CD8-positive, alpha-beta T cell (primary cell): ENCODE measurements at regions of chr10 and their contacts with region 1.

Region 1: DNA sequence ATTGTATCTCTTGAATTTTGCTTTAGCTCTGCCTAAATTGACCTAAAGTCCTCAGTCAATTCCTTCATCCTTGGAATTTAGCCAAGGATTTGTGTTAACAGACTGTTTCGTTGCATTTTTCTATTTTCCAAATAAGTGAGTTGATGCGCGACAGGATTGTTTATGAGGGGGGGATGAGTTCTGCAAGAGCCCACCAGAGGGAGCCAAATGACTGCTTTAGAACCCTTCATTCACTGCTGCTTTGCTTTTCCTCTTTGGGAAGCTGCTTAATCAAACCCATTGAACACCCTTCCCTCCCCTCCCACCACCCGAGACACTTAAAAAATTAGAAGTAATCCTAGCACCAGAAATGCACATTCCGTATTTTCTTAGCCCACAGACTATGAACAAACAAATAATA is 33.7 kb upstream of the PTF1A start:
- DNase-seq: peak in 7 of 9 experiments; percentile 1 to 56 (median 27)
- ATAC-seq: no peak
- H3K4me3 ChIP-seq: no peak overlapping the region
- H3K4me3 Mint-ChIP-seq: no peak overlapping the region
- H3K27ac ChIP-seq: no peak overlapping the region
- H3K27ac Mint-ChIP-seq: no peak overlapping the region
- H3K4me1 ChIP-seq: peaks cover 4% of the 10 kb centered on the region
- H3K4me1 Mint-ChIP-seq: peaks cover 6% of the 10 kb centered on the region
- H3K27me3 ChIP-seq: peaks cover 4 to 6% of the 10 kb centered on the region in 2 experiments
- H3K27me3 Mint-ChIP-seq: peaks cover 47% of the 10 kb centered on the region
- CTCF ChIP-seq: peak; percentile 83

Region 2: GRCh38 chr10:23047201-23048050 is 110.9 kb before region 1 on chr10:
- CTCF ChIA-PET with region 1: no interaction called
- POLR2A ChIA-PET with region 1: no interaction called
- intact Hi-C with region 1: no loop called
- DNase-seq: no peak
- ATAC-seq: no peak
- H3K4me3 ChIP-seq: no peak overlapping the region
- H3K4me3 Mint-ChIP-seq: no peak overlapping the region
- H3K27ac ChIP-seq: no peak overlapping the region
- H3K27ac Mint-ChIP-seq: no peak overlapping the region
- H3K4me1 ChIP-seq: no peaks in the 10 kb centered on the region
- H3K4me1 Mint-ChIP-seq: no peaks in the 10 kb centered on the region
- H3K27me3 ChIP-seq: no peaks in the 10 kb centered on the region
- H3K27me3 Mint-ChIP-seq: peaks cover 17% of the 10 kb centered on the region
- CTCF ChIP-seq: no peak

Region 3: DNA sequence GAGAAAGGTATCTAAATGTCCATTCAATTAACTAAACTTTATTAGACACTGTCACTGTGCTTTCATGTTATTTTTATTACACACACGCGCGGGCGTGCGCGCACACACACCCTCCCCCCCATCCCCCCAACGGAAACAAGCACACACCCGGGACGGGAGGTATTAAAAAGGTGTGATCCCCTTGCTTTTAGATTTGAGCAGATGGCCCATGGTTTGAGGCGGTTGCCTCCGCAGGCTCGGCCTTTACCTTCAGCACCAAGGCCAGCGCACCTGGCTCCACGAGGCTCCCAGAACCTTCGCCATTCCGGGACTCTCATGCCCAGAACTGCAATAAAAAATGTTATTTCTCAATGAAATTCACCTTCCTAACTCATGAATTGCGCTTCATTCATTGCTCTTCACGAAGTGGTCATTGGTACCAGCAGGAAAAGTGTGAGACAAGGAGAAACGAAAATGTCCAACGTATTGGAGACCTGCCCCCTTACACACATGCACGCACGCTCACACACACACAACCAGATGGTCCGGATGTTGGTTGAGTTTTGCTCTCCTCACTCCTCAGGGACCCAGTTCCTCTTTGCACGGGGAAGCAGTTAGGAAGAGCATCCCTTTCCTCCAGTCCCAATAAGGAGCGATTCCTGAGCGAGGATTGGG is 13.0 kb after region 1 on chr10:
- CTCF ChIA-PET with region 1: interaction called, 15 read pairs
- POLR2A ChIA-PET with region 1: no interaction called
- intact Hi-C with region 1: no loop called
- DNase-seq: no peak
- ATAC-seq: no peak
- H3K4me3 ChIP-seq: no peak overlapping the region
- H3K4me3 Mint-ChIP-seq: no peak overlapping the region
- H3K27ac ChIP-seq: no peak overlapping the region
- H3K27ac Mint-ChIP-seq: no peak overlapping the region
- H3K4me1 ChIP-seq: no peaks in the 10 kb centered on the region
- H3K4me1 Mint-ChIP-seq: peaks cover 9% of the 10 kb centered on the region
- H3K27me3 ChIP-seq: peaks cover 4 to 14% of the 10 kb centered on the region in 2 experiments
- H3K27me3 Mint-ChIP-seq: peaks cover 44% of the 10 kb centered on the region
- CTCF ChIP-seq: no peak

Region 4: GRCh38 chr10:23516530-23516929 is 358.2 kb after region 1 on chr10:
- CTCF ChIA-PET with region 1: interaction called, 4 read pairs
- POLR2A ChIA-PET with region 1: no interaction called
- intact Hi-C with region 1: loop called in 1 of 2 experiments (anchors 5 kb)
- DNase-seq: peak in 2 of 9 experiments; percentile 22 to 40
- ATAC-seq: no peak
- H3K4me3 ChIP-seq: no peak overlapping the region
- H3K4me3 Mint-ChIP-seq: no peak overlapping the region
- H3K27ac ChIP-seq: no peak overlapping the region
- H3K27ac Mint-ChIP-seq: no peak overlapping the region
- H3K4me1 ChIP-seq: no peaks in the 10 kb centered on the region
- H3K4me1 Mint-ChIP-seq: no peaks in the 10 kb centered on the region
- H3K27me3 ChIP-seq: no peaks in the 10 kb centered on the region
- H3K27me3 Mint-ChIP-seq: peaks cover 21% of the 10 kb centered on the region
- CTCF ChIP-seq: peak; percentile 40

Region 5: DNA sequence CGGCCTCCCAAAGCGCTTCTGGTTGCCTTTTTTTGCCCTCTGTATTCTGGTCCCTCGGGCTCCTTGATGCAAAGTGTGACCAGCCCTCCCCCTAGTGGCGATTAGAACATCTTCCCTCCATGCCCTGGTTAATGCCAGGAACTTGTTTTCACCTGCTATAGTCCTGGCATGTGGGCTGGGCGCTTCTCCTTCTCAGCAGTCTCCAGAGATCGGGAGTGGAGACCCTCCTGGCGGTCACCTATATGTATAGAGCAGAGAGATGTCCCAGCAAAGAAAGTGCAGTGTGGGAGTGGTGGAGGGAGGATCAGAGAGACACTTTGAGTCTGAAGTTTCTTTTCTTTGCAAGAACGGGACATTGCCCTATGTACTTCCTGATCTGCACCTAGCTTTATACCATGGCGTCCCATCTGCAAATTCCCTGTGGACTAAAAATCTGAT is 544.6 kb after region 1 on chr10:
- CTCF ChIA-PET with region 1: no interaction called
- POLR2A ChIA-PET with region 1: no interaction called
- intact Hi-C with region 1: loop called in 1 of 2 experiments (anchors 1 kb)
- DNase-seq: peak in 8 of 9 experiments; percentile 19 to 72 (median 51)
- ATAC-seq: peak; percentile 57
- H3K4me3 ChIP-seq: no peak overlapping the region
- H3K4me3 Mint-ChIP-seq: no peak overlapping the region
- H3K27ac ChIP-seq: no peak overlapping the region
- H3K27ac Mint-ChIP-seq: no peak overlapping the region
- H3K4me1 ChIP-seq: no peaks in the 10 kb centered on the region
- H3K4me1 Mint-ChIP-seq: peaks cover 6% of the 10 kb centered on the region
- H3K27me3 ChIP-seq: no peaks in the 10 kb centered on the region
- H3K27me3 Mint-ChIP-seq: peaks cover 16% of the 10 kb centered on the region
- CTCF ChIP-seq: peak; percentile 60

Region 6: DNA sequence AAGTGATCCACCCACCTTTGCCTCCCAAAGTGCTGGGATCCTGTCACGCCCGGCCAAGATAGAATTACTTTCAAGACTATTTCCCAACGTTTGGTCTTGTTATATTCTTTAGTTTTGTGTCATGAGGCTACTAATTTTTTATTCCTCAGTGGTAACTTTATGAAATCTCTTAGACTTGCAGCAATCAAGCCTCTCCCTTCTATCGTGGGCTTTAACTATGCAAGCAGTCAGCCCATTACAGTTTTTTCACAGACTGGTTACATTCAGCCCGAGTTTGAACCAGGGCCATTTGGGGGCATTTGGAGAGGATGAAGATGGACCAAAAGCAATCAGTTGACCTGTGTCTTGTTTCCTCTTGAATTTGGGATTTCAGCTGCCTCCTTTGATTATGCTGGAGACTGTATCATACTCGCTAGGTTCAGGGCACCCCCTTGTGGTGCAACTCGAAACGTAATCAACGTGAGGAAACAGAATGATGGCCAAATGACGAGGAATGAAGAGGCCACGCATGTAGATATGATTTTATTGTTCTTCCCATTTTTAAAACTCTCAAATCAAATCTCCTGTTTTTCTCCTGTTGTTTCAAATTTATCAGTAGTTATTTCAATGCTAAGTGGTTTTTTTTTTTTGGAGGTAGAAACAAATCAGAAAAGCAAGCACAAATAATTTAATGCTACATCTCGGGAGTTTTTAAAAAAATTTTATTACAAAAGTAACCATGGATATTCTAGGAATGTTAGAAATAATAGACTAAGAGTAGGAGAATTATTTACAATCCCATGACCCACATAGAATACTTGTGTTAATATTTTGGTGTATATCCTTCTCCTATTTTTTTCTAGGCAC is 1202.1 kb after region 1 on chr10:
- CTCF ChIA-PET with region 1: no interaction called
- POLR2A ChIA-PET with region 1: no interaction called
- intact Hi-C with region 1: loop called (anchors 5 kb)
- DNase-seq: peak in 1 of 9 experiments; percentile 6
- ATAC-seq: no peak
- H3K4me3 ChIP-seq: no peak overlapping the region
- H3K4me3 Mint-ChIP-seq: no peak overlapping the region
- H3K27ac ChIP-seq: no peak overlapping the region
- H3K27ac Mint-ChIP-seq: no peak overlapping the region
- H3K4me1 ChIP-seq: no peaks in the 10 kb centered on the region
- H3K4me1 Mint-ChIP-seq: no peaks in the 10 kb centered on the region
- H3K27me3 ChIP-seq: no peaks in the 10 kb centered on the region
- H3K27me3 Mint-ChIP-seq: no peaks in the 10 kb centered on the region
- CTCF ChIP-seq: no peak

Region 7: DNA sequence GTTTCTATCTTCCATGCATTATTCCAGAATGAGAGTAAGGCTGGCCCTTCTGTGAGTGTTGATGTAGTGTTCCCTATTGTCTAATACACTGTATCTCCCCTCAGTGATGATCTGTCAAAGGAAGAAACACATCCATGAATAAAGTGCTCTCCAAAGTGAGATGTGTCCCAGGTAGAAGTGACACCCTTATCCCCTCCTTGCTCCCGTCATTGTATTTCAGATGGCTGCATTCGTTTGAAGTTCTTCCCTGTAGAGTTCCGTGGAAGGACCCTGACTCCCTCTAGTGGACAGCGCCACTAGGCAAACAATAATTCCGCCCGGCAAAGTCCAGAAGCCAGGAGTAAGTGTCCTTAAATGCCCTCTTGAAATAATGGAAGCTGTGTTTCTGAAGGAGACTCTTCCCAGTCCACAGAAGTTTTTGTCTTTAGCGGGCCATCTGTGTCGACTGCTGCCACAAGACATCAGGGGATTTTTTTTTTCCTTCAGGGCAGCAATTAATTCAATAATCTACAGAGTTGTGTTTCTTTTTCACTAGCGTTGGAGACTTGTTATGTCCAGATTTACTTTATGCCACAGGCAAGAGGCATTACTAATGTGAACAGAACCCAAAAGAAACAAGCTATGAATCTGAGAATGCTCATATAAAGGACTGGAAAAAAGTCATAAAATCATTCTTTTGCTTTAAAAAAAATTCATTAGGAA is 1922.7 kb after region 1 on chr10:
- CTCF ChIA-PET with region 1: no interaction called
- POLR2A ChIA-PET with region 1: no interaction called
- intact Hi-C with region 1: loop called in 1 of 2 experiments (anchors 5 kb)
- DNase-seq: peak; percentile 15 to 73 (median 60)
- ATAC-seq: peak; percentile 51
- H3K4me3 ChIP-seq: no peak overlapping the region
- H3K4me3 Mint-ChIP-seq: no peak overlapping the region
- H3K27ac ChIP-seq: no peak overlapping the region
- H3K27ac Mint-ChIP-seq: no peak overlapping the region
- H3K4me1 ChIP-seq: no peaks in the 10 kb centered on the region
- H3K4me1 Mint-ChIP-seq: peaks cover 3% of the 10 kb centered on the region
- H3K27me3 ChIP-seq: no peaks in the 10 kb centered on the region
- H3K27me3 Mint-ChIP-seq: peaks cover 7% of the 10 kb centered on the region
- CTCF ChIP-seq: peak; percentile 71